Activated CD4-positive, alpha-beta T cell treated with anti-CD3 and anti-CD28 coated beads, Interleukin-2, amount 10 ng/mL, durations not matched to agents 24 days and 14 days (primary cell): ENCODE measurements at regions of chr4 and their contacts with region 1.

Region 1: DNA sequence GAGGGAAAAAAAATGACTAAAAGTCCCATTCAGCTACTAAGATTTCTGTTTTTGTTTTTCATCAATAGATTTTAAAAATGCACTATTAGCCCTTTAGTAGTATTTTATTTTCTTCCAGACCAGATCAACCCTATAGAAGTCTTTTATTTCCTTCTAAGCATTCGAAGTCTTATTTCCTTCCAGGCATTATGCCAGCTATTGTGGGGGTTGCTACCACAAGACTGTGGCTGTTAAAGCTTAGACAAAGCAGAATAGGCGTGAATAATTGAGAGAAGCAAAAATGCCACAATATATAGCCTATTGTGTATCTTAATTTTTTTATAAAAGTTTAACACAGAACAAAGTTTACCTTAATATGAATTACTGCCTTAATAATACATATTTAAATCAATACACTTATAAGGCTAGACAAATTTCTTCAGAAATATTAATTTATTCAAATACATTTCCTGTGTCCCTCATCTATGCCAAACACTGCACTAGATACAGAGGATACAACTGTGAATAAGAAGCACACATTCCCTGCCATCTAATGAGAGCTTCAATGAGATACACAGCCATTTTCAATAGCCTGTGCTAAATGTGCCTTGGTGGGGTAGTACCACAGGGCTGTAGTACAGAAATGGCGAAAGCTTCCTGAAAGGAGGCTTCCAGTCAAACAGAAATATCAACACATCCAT is 33.1 kb downstream of the SLC10A7 start:
- DNase-seq: no peak
- H3K4me3 Mint-ChIP-seq: no peak overlapping the region
- H3K27ac Mint-ChIP-seq: no peak overlapping the region
- H3K4me1 Mint-ChIP-seq: peaks cover 13% of the 10 kb centered on the region
- H3K27me3 Mint-ChIP-seq: no peaks in the 10 kb centered on the region

Region 2: DNA sequence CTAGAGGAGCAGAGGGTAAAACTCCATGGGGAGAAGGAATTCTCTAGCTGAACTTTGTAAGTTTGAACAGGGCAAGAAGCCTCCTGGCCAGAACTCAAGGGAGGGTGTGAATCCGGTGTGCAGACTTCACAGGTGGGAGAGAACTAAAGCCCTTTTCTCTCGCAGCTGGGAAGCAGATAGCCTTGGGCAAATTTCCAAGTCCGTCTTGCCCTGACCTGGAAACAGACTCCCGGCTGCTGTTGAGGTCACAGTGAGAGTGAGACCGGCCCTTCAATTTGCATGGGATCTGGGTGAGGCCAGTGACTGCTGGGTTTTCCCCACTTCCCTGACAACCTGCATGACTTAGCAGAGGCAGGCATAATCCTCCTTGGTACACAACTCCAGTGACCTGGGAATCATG is 455.5 kb before region 1 on chr4:
- intact Hi-C with region 1: no loop called
- DNase-seq: no peak
- H3K4me3 Mint-ChIP-seq: no peak overlapping the region
- H3K27ac Mint-ChIP-seq: no peak overlapping the region
- H3K4me1 Mint-ChIP-seq: peaks cover 7% of the 10 kb centered on the region
- H3K27me3 Mint-ChIP-seq: peaks cover 14% of the 10 kb centered on the region

Region 3: DNA sequence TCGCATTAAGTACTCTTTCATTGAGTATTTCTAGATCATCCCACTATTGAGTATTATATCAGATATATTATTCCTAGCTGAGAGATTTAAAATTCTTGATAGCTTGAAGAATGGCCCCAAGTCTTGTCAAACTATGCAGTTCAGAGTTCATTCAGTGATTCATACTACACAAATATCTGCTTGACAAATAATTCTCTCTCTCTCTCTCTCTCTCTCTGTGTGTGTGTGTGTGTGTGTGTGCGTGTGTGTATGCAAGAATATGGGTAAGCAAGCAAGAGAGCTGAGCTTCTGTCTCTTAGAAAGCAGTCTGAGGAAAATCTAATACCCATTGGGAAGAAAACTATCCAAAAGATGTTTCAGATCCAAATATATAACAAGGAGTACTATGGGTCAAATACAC is 108.9 kb before region 1 on chr4:
- intact Hi-C with region 1: no loop called
- DNase-seq: no peak
- H3K4me3 Mint-ChIP-seq: no peak overlapping the region
- H3K27ac Mint-ChIP-seq: no peak overlapping the region
- H3K4me1 Mint-ChIP-seq: no peaks in the 10 kb centered on the region
- H3K27me3 Mint-ChIP-seq: no peaks in the 10 kb centered on the region

Region 4: GRCh38 chr4:146428298-146428697 is 60.3 kb before region 1 on chr4:
- intact Hi-C with region 1: no loop called
- DNase-seq: no peak
- H3K4me3 Mint-ChIP-seq: no peak overlapping the region
- H3K27ac Mint-ChIP-seq: no peak overlapping the region
- H3K4me1 Mint-ChIP-seq: no peaks in the 10 kb centered on the region
- H3K27me3 Mint-ChIP-seq: no peaks in the 10 kb centered on the region

Region 5: DNA sequence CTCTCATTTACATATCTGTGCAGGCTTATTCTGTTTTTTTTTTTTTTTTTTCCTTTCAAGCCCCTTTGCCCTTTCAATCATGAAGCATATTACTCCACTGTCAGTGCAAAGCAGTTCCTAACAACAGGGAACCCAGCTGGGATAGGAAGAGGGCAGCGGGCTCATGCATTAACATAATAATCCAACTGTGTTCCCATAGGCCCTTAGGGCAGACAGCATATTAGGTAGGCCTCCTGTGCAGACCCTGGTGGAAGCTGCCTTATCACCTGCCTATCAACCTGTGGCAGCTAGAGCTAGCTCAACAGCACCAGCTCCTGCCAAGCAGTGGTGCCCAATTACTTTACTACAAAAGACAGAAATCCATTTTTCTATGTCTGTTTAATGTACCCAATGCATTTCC is 16.2 kb before region 1 on chr4:
- intact Hi-C with region 1: loop called (anchors 2 kb)
- DNase-seq: no peak
- H3K4me3 Mint-ChIP-seq: no peak overlapping the region
- H3K27ac Mint-ChIP-seq: no peak overlapping the region
- H3K4me1 Mint-ChIP-seq: peaks cover 4% of the 10 kb centered on the region
- H3K27me3 Mint-ChIP-seq: no peaks in the 10 kb centered on the region

Region 6: DNA sequence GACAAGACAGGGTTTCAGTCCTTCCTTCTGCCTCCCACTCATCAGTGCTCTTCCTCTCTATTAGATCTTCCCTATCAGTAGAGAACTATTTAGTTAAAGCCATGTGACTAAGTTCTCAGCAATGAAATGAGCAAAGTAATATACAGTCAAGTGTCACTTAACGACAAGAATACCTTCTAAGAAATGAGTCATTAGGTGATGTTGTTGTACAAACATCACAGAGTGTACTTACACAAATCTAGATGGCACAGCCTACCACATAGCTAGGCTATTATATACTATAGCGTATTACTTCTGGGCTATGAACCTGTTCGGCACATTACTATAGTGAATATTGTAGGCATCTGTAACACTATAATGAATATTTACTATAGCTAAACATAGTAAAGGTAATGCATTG is 221.3 kb after region 1 on chr4:
- intact Hi-C with region 1: no loop called
- DNase-seq: no peak
- H3K4me3 Mint-ChIP-seq: no peak overlapping the region
- H3K27ac Mint-ChIP-seq: no peak overlapping the region
- H3K4me1 Mint-ChIP-seq: no peaks in the 10 kb centered on the region
- H3K27me3 Mint-ChIP-seq: no peaks in the 10 kb centered on the region